PC-9 (cell line): ENCODE measurements at regions of chr5 and their contacts with region 1.

Region 1: DNA sequence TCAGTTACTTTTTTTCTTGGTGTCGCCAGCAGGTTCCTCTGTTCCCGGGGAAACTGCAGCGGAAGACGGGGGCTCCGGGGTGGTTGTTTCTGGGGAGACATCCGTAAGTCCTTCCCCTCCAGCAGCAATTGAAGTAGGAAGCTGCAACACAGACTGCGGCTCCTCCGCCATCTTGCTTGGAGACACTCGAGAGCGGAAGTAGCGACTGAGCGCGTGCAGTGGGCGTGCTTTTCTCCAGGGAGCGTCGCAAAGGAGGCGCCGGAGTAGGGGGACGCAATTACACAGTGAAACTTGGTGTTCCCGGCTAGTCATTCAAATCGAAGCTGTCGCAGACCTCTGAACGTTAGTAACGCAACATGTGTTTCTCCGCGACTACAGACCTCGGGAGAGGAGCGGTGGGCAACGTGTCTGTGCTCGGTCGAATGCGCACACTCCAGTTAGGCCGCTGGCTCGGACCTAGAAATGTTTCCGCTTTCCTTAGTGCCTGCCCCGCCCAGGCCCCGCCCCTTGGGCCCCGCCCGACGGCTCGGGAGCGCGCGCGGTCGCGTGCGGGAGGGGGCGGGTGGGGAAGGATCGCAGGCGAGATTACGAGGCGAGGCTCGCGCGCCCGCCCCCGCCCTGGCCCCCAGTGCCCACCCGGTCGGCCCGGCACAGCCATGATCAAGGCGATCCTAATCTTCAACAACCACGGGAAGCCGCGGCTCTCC is at the starts of genes AP3S1 and ATG12:
- DNase-seq: peak; percentile 81 to 89
- H3K4me3 ChIP-seq: peak within 1 kb of the TSS; percentile 88
- H3K27ac ChIP-seq: peak within 1 kb of the TSS; percentile 89
- H3K4me1 ChIP-seq: peaks cover 35% of the 10 kb centered on the region
- H3K27me3 ChIP-seq: no peaks in the 10 kb centered on the region
- CTCF ChIP-seq: no peak; the same call in 1 of the 2 replicates
- total RNA-seq, gene AP3S1: 38.8 and 49.1 TPM in 2 replicates
- total RNA-seq, gene ATG12: 39.8 and 48.7 TPM in 2 replicates

Region 2: GRCh38 chr5:115098041-115098702 is 743.4 kb before region 1 on chr5:
- CTCF ChIA-PET with region 1: no interaction called
- POLR2A ChIA-PET with region 1: no interaction called
- intact Hi-C with region 1: loop called (anchors 5 kb)
- DNase-seq: peak; percentile 24 to 38
- H3K4me3 ChIP-seq: no peak overlapping the region
- H3K27ac ChIP-seq: no peak overlapping the region
- H3K4me1 ChIP-seq: no peaks in the 10 kb centered on the region
- H3K27me3 ChIP-seq: no peaks in the 10 kb centered on the region
- CTCF ChIP-seq: peak; percentile 82

Region 3: GRCh38 chr5:115625579-115626444 is 215.7 kb before region 1 on chr5 and contains the start of gene TMED7:
- CTCF ChIA-PET with region 1: no interaction called
- POLR2A ChIA-PET with region 1: no interaction called
- intact Hi-C with region 1: loop called (anchors 1 kb)
- DNase-seq: peak; percentile 91 to 98
- H3K4me3 ChIP-seq: peak within 1 kb of the TSS; percentile 98
- H3K27ac ChIP-seq: peak within 1 kb of the TSS; percentile 81
- H3K4me1 ChIP-seq: peaks cover 19% of the 10 kb centered on the region
- H3K27me3 ChIP-seq: no peaks in the 10 kb centered on the region
- CTCF ChIP-seq: no peak
- total RNA-seq, gene TMED7: 70.7 and 78.9 TPM in 2 replicates

Region 4: GRCh38 chr5:115873392-115873791 is 31.9 kb after region 1 on chr5:
- CTCF ChIA-PET with region 1: interaction called, 15 read pairs
- POLR2A ChIA-PET with region 1: no interaction called
- intact Hi-C with region 1: no loop called
- DNase-seq: peak in 1 of 2 experiments; percentile 87
- H3K4me3 ChIP-seq: no peak overlapping the region
- H3K27ac ChIP-seq: no peak overlapping the region
- H3K4me1 ChIP-seq: peaks cover 16% of the 10 kb centered on the region
- H3K27me3 ChIP-seq: no peaks in the 10 kb centered on the region
- CTCF ChIP-seq: no peak

Region 5: GRCh38 chr5:116084871-116085715 is 243.6 kb after region 1 on chr5 and contains the start of gene COMMD10:
- CTCF ChIA-PET with region 1: no interaction called
- POLR2A ChIA-PET with region 1: no interaction called
- intact Hi-C with region 1: loop called (anchors 5 kb)
- DNase-seq: peak; percentile 45 to 61
- H3K4me3 ChIP-seq: peak within 1 kb of the TSS; percentile 67
- H3K27ac ChIP-seq: peak within 1 kb of the TSS; percentile 58
- H3K4me1 ChIP-seq: peaks cover 6% of the 10 kb centered on the region; the same call in 1 of the 2 replicates
- H3K27me3 ChIP-seq: no peaks in the 10 kb centered on the region
- CTCF ChIP-seq: no peak
- total RNA-seq, gene COMMD10: 10.4 and 17.9 TPM in 2 replicates